Caco-2 (cell line): ENCODE measurements at regions of chr2 and their contacts with region 1.

Region 1: GRCh38 chr2:203605302-203605701 is 70.2 kb upstream of the RAPH1 start:
- DNase-seq: peak; percentile 34 to 36
- H3K4me3 ChIP-seq: no peak overlapping the region
- H3K4me3 Mint-ChIP-seq: no peak overlapping the region
- H3K27ac Mint-ChIP-seq: no peak overlapping the region
- H3K4me1 ChIP-seq: peaks cover 18% of the 10 kb centered on the region; the same call in 1 of the 2 replicates
- H3K4me1 Mint-ChIP-seq: peaks cover 5% of the 10 kb centered on the region
- H3K27me3 ChIP-seq: no peaks in the 10 kb centered on the region
- H3K27me3 Mint-ChIP-seq: no peaks in the 10 kb centered on the region
- CTCF ChIP-seq: no peak

Region 2: GRCh38 chr2:203476881-203477280 is 128.4 kb before region 1 on chr2:
- CTCF ChIA-PET with region 1: no interaction called
- POLR2A ChIA-PET with region 1: no interaction called
- intact Hi-C with region 1: no loop called
- DNase-seq: no peak
- H3K4me3 ChIP-seq: no peak overlapping the region
- H3K4me3 Mint-ChIP-seq: no peak overlapping the region
- H3K27ac Mint-ChIP-seq: no peak overlapping the region
- H3K4me1 ChIP-seq: no peaks in the 10 kb centered on the region
- H3K4me1 Mint-ChIP-seq: no peaks in the 10 kb centered on the region
- H3K27me3 ChIP-seq: no peaks in the 10 kb centered on the region
- H3K27me3 Mint-ChIP-seq: no peaks in the 10 kb centered on the region
- CTCF ChIP-seq: no peak

Region 3: DNA sequence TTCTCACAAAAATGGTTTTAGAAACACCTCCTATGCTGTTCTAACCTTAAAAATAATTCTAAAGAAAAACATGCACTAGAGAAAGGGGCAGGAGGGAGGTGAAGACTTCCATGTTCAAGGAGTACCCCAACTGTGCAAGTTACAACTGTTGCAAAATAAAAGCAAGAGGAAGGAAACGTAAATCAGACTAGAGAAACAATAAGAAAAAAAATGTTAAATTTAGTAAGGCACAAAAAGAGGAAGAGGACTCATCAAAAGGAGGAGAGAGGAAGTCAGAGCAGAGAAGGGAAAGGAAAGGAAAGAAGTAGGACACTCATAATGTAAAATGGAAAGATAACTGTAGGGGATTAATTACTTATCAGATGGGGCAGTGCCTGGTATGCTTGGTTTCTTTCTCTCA is 104.4 kb before region 1 on chr2:
- CTCF ChIA-PET with region 1: no interaction called
- POLR2A ChIA-PET with region 1: no interaction called
- intact Hi-C with region 1: no loop called
- DNase-seq: no peak
- H3K4me3 ChIP-seq: no peak overlapping the region
- H3K4me3 Mint-ChIP-seq: no peak overlapping the region
- H3K27ac Mint-ChIP-seq: peak overlapping the region; percentile 11
- H3K4me1 ChIP-seq: peaks cover 26% of the 10 kb centered on the region
- H3K4me1 Mint-ChIP-seq: peaks cover 21% of the 10 kb centered on the region
- H3K27me3 ChIP-seq: no peaks in the 10 kb centered on the region
- H3K27me3 Mint-ChIP-seq: no peaks in the 10 kb centered on the region
- CTCF ChIP-seq: no peak

Region 4: GRCh38 chr2:203551778-203552177 is 53.5 kb before region 1 on chr2:
- CTCF ChIA-PET with region 1: no interaction called
- POLR2A ChIA-PET with region 1: no interaction called
- intact Hi-C with region 1: loop called (anchors 1 kb)
- DNase-seq: peak; percentile 87 to 95
- H3K4me3 ChIP-seq: no peak overlapping the region
- H3K4me3 Mint-ChIP-seq: peak overlapping the region; percentile 57
- H3K27ac Mint-ChIP-seq: peak overlapping the region; percentile 55
- H3K4me1 ChIP-seq: peaks cover 26% of the 10 kb centered on the region
- H3K4me1 Mint-ChIP-seq: peaks cover 22% of the 10 kb centered on the region
- H3K27me3 ChIP-seq: no peaks in the 10 kb centered on the region
- H3K27me3 Mint-ChIP-seq: no peaks in the 10 kb centered on the region
- CTCF ChIP-seq: no peak

Region 5: DNA sequence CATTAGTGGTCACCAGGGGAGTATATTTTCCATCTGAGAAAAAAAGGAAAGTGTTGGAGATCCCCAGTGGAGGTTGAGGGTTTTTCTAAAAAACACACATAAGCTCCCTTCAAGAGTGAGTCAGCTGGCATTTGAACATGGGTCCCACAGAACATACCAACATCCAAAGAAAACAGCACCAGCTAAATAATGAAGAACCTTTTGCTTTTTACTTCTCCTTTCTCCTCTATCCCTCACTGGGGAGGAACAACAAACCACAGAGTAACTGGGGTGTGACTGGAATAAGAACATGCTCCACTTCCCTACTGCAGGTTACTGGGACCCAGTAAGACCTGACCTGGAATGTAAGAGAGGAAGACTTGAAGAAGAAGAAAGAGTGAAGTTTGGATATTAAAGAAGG is 13.7 kb before region 1 on chr2:
- CTCF ChIA-PET with region 1: no interaction called
- POLR2A ChIA-PET with region 1: no interaction called
- intact Hi-C with region 1: no loop called
- DNase-seq: no peak
- H3K4me3 ChIP-seq: no peak overlapping the region
- H3K4me3 Mint-ChIP-seq: no peak overlapping the region
- H3K27ac Mint-ChIP-seq: no peak overlapping the region
- H3K4me1 ChIP-seq: no peaks in the 10 kb centered on the region
- H3K4me1 Mint-ChIP-seq: peaks cover 3% of the 10 kb centered on the region
- H3K27me3 ChIP-seq: no peaks in the 10 kb centered on the region
- H3K27me3 Mint-ChIP-seq: no peaks in the 10 kb centered on the region
- CTCF ChIP-seq: no peak

Region 6: GRCh38 chr2:203623096-203623495 is 17.8 kb after region 1 on chr2:
- CTCF ChIA-PET with region 1: no interaction called
- POLR2A ChIA-PET with region 1: no interaction called
- intact Hi-C with region 1: no loop called
- DNase-seq: no peak
- H3K4me3 ChIP-seq: no peak overlapping the region
- H3K4me3 Mint-ChIP-seq: no peak overlapping the region
- H3K27ac Mint-ChIP-seq: no peak overlapping the region
- H3K4me1 ChIP-seq: peaks cover 21% of the 10 kb centered on the region
- H3K4me1 Mint-ChIP-seq: peaks cover 23% of the 10 kb centered on the region
- H3K27me3 ChIP-seq: no peaks in the 10 kb centered on the region
- H3K27me3 Mint-ChIP-seq: no peaks in the 10 kb centered on the region
- CTCF ChIP-seq: no peak